Common myeloid progenitor, CD34-positive (primary cell): ENCODE measurements at regions of chr3 and their contacts with region 1.

Region 1: DNA sequence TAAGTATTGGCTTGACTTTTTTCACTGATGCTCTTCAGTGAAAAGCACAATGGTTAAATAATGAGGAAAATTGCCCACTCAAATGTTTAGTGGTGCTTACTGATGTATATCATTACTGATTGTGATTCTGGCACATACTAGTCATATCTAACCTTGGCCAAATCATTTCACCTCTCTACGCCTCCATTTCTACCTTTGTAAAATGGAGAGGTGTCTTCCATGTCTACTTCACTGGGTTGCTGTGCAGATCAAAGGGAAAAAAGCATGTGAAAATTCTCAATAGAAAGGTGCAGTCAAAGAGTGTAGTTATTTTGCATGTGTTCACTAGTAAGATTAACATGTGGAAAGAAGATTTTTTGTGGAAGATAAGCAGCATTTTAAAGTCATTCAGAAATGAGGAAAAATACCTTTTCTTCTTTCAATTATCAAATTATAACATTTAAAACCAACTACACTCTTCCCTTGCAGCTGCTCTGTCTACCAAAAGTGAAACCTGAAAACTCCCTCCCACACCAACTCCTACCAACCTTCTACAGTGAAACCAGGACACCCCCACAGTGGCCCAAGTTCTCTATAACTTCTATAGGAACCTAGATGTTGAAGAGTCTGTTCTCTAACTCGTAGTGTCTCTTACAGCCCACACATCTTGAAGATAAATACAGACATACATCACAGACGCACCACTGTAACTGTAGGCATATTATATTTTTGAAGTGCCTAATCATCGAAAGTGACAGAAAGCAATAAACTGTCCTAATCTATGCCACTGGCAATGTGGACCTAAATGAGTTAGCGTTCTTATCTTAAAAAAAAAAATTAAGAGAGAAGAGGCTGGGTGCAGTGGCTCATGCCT is 1.4 kb downstream of the CD200R1 start:
- DNase-seq: peak in 2 of 3 donors; percentile 58 to 61
- H3K4me3 ChIP-seq: peak overlapping the region in 2 of 7 experiments; percentile 10 to 40
- H3K27ac ChIP-seq: no peak overlapping the region
- H3K4me1 ChIP-seq: peaks cover 16 to 42% (median 23%) of the 10 kb centered on the region in 4 experiments
- H3K27me3 ChIP-seq: no peaks in the 10 kb centered on the region

Region 2: GRCh38 chr3:112746675-112747280 is 226.8 kb before region 1 on chr3:
- CTCF ChIA-PET with region 1: interaction called, 4 read pairs
- POLR2A ChIA-PET with region 1: interaction called, 11 read pairs
- DNase-seq: no peak
- H3K4me3 ChIP-seq: no peak overlapping the region
- H3K27ac ChIP-seq: no peak overlapping the region
- H3K4me1 ChIP-seq: no peaks in the 10 kb centered on the region
- H3K27me3 ChIP-seq: peaks cover 0 to 1% (median 0%) of the 10 kb centered on the region in 5 experiments

Region 3: DNA sequence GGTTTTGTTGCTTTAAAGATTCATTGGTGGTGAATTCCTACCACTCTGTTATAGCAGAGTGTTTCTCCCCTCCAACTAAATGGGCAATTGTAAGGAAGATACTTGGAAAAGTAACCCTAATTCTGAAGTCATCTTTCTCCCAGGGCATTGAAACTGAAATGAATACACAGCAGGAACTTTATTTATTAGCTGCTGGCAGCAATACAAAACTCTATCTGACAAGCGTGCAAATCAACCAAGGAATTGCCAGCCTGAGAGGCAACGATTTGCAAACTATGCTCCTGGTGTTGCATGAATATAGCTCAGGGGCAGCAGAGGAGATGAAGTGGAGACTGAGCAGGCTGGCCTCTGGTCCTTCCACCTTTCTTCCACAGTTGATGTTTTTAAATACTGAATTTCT is 47.6 kb before region 1 on chr3:
- CTCF ChIA-PET with region 1: no interaction called
- POLR2A ChIA-PET with region 1: no interaction called
- DNase-seq: no peak
- H3K4me3 ChIP-seq: no peak overlapping the region
- H3K27ac ChIP-seq: no peak overlapping the region
- H3K4me1 ChIP-seq: no peaks in the 10 kb centered on the region
- H3K27me3 ChIP-seq: no peaks in the 10 kb centered on the region